Heart left ventricle (tissue), 16 donors: ENCODE measurements at regions of chr6 and their contacts with region 1.

Region 1: DNA sequence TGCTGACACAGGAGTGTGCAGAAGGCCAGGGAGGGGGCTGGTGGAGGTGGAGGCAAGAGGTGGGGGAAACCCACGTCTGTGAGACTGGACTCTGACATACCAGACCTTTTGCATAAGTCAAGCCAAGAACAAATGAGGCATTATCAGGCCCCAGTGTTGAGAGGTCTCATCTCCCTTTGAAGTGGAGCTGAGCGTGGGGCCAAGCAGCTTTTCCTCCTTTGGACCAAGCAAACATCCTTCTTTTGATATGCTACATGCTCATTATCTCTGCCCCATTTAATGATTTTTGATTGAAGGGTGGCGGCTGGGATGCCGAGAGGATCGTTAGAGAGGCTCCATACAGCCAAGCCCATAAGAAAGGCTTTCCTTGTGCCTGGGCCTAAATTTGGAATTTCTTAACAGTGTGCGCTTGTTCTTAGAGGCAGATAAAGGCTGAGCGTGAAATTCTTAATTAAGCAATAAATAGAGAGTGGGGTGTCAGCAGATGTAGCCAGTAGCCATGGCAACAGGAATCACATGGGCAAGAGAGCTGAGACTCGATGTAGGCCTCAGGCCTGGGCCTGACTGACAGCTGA is 244.5 kb downstream of the PKHD1 start:
- DNase-seq: no peak
- ATAC-seq: no peak
- H3K4me3 ChIP-seq: no peak overlapping the region
- H3K27ac ChIP-seq: no peak overlapping the region
- H3K4me1 ChIP-seq: no peaks in the 10 kb centered on the region
- H3K27me3 ChIP-seq: no peaks in the 10 kb centered on the region
- CTCF ChIP-seq: no peak
- POLR2A ChIP-seq: no peak

Region 2: DNA sequence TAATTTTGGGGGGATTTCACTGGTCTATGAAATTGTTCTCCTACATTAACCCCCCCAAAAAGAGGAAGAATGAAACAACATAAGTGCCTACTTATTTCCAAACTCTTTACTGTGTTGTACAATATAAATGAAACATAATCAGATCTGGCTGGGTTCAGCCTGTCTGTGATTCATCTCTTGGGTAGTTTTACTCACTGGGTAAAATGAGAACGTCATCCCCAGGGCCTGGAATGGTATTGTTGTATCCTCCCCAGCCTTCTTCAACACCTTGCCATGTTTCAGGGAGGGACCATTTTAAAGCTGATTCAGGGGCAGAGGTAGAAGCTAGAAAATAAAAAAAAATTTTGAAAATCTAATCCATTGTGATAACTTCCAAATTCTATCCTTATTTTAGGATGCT is 12.2 kb before region 1 on chr6:
- intact Hi-C with region 1: loop called in 1 of 10 experiments (anchors 1 kb)
- DNase-seq: no peak
- ATAC-seq: no peak
- H3K4me3 ChIP-seq: no peak overlapping the region
- H3K27ac ChIP-seq: no peak overlapping the region
- H3K4me1 ChIP-seq: no peaks in the 10 kb centered on the region
- H3K27me3 ChIP-seq: no peaks in the 10 kb centered on the region
- CTCF ChIP-seq: no peak
- POLR2A ChIP-seq: no peak